ENCODE measurements at regions of chr2 and their contacts with region 1.

Region 1: GRCh38 chr2:226699321-226699720 is 100.3 kb downstream of the IRS1 start:
- DNase-seq: peak; percentile 29 to 53
- H3K4me3 ChIP-seq: no peak overlapping the region
- H3K27ac ChIP-seq: no peak overlapping the region
- H3K4me1 ChIP-seq: no peaks in the 10 kb centered on the region
- H3K27me3 ChIP-seq: no peaks in the 10 kb centered on the region
- CTCF ChIP-seq: no peak
- POLR2A ChIP-seq: no peak

Region 2: GRCh38 chr2:225895126-225895525 is 804.2 kb before region 1 on chr2:
- intact Hi-C with region 1: loop called (anchors 10 kb)
- DNase-seq: no peak
- H3K4me3 ChIP-seq: no peak overlapping the region
- H3K27ac ChIP-seq: no peak overlapping the region
- H3K4me1 ChIP-seq: no peaks in the 10 kb centered on the region
- H3K27me3 ChIP-seq: no peaks in the 10 kb centered on the region
- CTCF ChIP-seq: no peak
- POLR2A ChIP-seq: no peak

Region 3: GRCh38 chr2:226678422-226678821 is 20.9 kb before region 1 on chr2:
- intact Hi-C with region 1: loop called (anchors 2 kb)
- DNase-seq: no peak
- H3K4me3 ChIP-seq: no peak overlapping the region
- H3K27ac ChIP-seq: no peak overlapping the region
- H3K4me1 ChIP-seq: no peaks in the 10 kb centered on the region
- H3K27me3 ChIP-seq: no peaks in the 10 kb centered on the region
- CTCF ChIP-seq: no peak
- POLR2A ChIP-seq: no peak

Region 4: GRCh38 chr2:226742347-226742746 is 43.0 kb after region 1 on chr2:
- intact Hi-C with region 1: no loop called
- DNase-seq: peak in 1 of 2 donors; percentile 68
- H3K4me3 ChIP-seq: no peak overlapping the region
- H3K27ac ChIP-seq: peak overlapping the region; percentile 62 to 83
- H3K4me1 ChIP-seq: peaks cover 5 to 6% of the 10 kb centered on the region in 2 donors
- H3K27me3 ChIP-seq: no peaks in the 10 kb centered on the region
- CTCF ChIP-seq: no peak
- POLR2A ChIP-seq: no peak

Region 5: DNA sequence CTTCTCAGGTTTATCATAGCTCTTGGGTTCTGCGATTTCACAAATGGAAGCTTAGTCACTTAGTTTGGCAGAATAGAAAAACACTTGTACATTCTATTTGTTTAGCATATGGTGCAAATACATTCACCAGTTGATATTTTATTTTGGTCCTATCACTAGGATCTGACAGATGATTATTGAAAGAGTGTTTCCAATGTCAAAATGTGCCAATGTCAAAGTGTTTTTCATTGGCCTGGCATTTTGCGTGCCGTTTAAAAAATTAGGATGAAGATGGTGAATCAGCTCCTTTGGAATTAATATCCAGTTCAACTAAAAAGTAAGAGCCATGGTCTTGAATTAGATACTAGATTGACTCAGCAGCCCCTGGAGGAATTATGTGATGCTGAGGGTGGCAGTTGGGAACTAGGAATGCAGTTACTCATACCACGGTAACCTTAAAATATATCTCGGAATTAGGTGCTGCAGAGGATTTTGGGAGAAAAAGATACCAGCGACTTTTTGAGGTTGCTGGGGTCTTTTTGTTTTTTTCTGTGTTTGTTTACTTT is 1395.1 kb after region 1 on chr2:
- intact Hi-C with region 1: no loop called
- DNase-seq: no peak
- H3K4me3 ChIP-seq: no peak overlapping the region
- H3K27ac ChIP-seq: no peak overlapping the region
- H3K4me1 ChIP-seq: no peaks in the 10 kb centered on the region
- H3K27me3 ChIP-seq: no peaks in the 10 kb centered on the region
- CTCF ChIP-seq: no peak
- POLR2A ChIP-seq: no peak

Measured in breast epithelium (tissue), 4 donors.